Activated CD8-positive, alpha-beta T cell treated with anti-CD3 and anti-CD28 coated beads for 36 hours (primary cell): ENCODE measurements at regions of chr16 and their contacts with region 1.

Region 1: GRCh38 chr16:58515125-58515870 is at the start of gene SETD6:
- DNase-seq: peak; percentile 83
- ATAC-seq: peak; percentile 77
- H3K4me3 Mint-ChIP-seq: peak within 1 kb of the TSS; percentile 92
- H3K27ac Mint-ChIP-seq: peak within 1 kb of the TSS; percentile 90
- H3K4me1 Mint-ChIP-seq: peaks cover 36% of the 10 kb centered on the region
- H3K27me3 Mint-ChIP-seq: no peaks in the 10 kb centered on the region
- CTCF ChIP-seq: no peak
- total RNA-seq, gene SETD6: 14.8 to 15.5 TPM

Region 2: GRCh38 chr16:58409316-58409973 is 105.9 kb before region 1 on chr16:
- CTCF ChIA-PET with region 1: no interaction called
- POLR2A ChIA-PET with region 1: no interaction called
- intact Hi-C with region 1: no loop called
- DNase-seq: no peak
- ATAC-seq: no peak
- H3K4me3 Mint-ChIP-seq: no peak overlapping the region
- H3K27ac Mint-ChIP-seq: no peak overlapping the region
- H3K4me1 Mint-ChIP-seq: no peaks in the 10 kb centered on the region
- H3K27me3 Mint-ChIP-seq: no peaks in the 10 kb centered on the region
- CTCF ChIP-seq: no peak

Region 3: DNA sequence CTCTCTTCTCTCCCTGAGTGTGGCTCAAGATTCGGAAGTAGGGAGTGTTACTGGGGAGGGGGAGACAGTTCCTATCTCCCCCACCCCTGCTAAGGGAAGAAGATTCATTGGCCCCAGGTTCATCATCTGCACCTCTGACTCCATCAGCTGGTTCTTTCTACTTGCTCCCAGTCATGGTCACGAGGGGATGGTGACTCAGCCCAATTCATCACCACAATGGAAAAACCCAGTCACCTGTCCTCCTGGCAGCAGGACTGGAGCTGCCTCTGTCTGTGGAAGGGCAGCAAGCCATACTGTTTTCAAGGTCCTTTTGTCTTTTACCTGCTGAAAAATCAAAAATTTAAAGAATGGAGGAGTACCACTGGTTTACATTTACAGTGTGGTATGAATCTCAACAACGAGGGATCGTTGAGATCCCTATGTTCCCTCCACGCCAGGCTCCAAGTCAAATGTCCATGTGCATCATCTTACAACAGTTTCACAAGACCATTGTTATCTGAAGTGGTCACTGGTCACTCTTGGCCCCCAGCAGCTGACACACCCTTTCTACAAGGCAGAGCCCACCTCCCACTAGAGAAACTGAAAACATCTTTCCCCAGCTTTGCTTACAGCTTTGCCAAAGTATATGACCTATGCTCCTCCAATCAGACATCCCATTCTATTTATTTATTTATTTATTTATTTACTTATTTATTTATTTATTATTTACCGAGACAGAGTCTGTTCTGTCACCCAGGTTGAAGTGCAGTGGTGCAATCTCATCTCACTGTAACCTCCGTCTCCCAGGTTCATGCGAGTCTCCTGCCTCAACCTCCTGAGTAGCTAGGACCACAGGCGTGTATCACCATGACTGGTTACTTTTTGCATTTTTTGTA is 55.7 kb before region 1 on chr16:
- CTCF ChIA-PET with region 1: no interaction called
- POLR2A ChIA-PET with region 1: no interaction called
- intact Hi-C with region 1: no loop called
- DNase-seq: peak; percentile 87
- ATAC-seq: peak; percentile 79
- H3K4me3 Mint-ChIP-seq: no peak overlapping the region
- H3K27ac Mint-ChIP-seq: no peak overlapping the region
- H3K4me1 Mint-ChIP-seq: peaks cover 8% of the 10 kb centered on the region
- H3K27me3 Mint-ChIP-seq: peaks cover 15% of the 10 kb centered on the region
- CTCF ChIP-seq: no peak

Region 4: DNA sequence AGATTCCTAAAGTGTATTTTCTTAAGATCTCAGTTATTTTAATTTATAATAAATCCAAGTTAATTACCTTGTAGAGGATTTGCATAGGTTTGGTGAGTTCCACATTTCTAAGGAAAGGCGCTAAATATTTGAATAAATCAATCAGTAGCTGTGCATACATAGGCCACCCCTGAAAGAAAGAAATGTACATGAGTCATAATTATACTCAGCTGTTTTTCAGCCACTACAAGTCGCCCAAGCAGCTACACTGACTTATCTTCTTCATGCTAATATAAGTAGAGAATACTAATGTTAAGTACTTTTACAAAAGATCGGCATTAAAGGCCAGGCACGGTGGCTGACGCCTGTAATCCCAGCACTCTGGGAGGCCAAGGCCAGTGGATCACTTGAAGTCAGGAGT is 14.9 kb after region 1 on chr16:
- CTCF ChIA-PET with region 1: no interaction called
- POLR2A ChIA-PET with region 1: interaction called, 19 read pairs
- intact Hi-C with region 1: no loop called
- DNase-seq: no peak
- ATAC-seq: no peak
- H3K4me3 Mint-ChIP-seq: no peak overlapping the region
- H3K27ac Mint-ChIP-seq: no peak overlapping the region
- H3K4me1 Mint-ChIP-seq: no peaks in the 10 kb centered on the region
- H3K27me3 Mint-ChIP-seq: no peaks in the 10 kb centered on the region
- CTCF ChIP-seq: no peak

Region 5: GRCh38 chr16:58629572-58630104 is 114.3 kb after region 1 on chr16 and contains the start of gene CNOT1:
- CTCF ChIA-PET with region 1: interaction called, 7 read pairs
- POLR2A ChIA-PET with region 1: interaction called, 29 read pairs
- intact Hi-C with region 1: no loop called
- DNase-seq: peak; percentile 98
- ATAC-seq: peak; percentile 88
- H3K4me3 Mint-ChIP-seq: peak within 1 kb of the TSS; percentile 100
- H3K27ac Mint-ChIP-seq: peak within 1 kb of the TSS; percentile 100
- H3K4me1 Mint-ChIP-seq: peaks cover 25% of the 10 kb centered on the region
- H3K27me3 Mint-ChIP-seq: no peaks in the 10 kb centered on the region
- CTCF ChIP-seq: no peak
- total RNA-seq, gene CNOT1: 274 to 281 TPM

Region 6: DNA sequence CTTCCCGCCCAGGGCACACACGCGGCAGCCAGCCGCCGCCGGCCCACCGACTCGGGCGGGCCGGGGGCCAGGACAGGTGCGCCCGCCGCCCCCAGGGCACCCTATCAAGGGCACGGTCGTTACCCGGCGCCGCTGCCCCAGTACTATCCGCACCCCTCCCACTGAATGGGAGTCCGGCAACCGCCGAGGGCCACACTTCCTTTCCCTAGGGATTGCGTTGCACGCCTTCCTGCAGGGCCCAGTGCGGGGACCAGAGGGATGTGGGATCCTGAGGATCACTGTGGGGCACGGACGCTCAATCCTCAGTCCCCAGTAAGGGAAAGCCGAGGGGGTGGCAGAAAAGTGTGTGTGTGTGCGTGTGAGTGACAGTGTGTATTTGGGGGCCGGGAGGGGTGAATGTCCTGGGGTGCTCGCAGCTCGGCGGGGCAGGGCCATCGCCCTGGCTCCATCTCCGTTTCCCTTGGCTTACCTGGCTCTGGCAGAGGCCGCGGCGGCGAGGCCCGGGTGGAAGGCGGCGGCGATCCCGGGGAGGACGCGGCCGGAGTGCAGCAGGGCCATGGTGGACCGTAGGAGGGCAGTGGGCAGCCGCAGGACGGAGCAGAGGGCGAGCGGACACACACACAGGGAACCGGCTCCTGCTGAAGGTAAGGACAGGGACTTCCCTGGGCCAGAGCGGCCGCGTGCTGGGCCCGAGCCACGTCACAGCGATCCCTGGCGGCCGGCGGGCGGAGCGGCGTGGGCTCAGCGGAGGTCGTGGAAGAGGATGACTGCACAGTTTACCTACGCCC is 218.6 kb after region 1 on chr16 and contains the start of gene GOT2:
- CTCF ChIA-PET with region 1: no interaction called
- POLR2A ChIA-PET with region 1: interaction called, 3 read pairs
- intact Hi-C with region 1: loop called (anchors 5 kb)
- DNase-seq: peak; percentile 86
- ATAC-seq: peak; percentile 92
- H3K4me3 Mint-ChIP-seq: peak within 1 kb of the TSS; percentile 96
- H3K27ac Mint-ChIP-seq: peak within 1 kb of the TSS; percentile 97
- H3K4me1 Mint-ChIP-seq: peaks cover 39% of the 10 kb centered on the region
- H3K27me3 Mint-ChIP-seq: peaks cover under 1% of the 10 kb centered on the region
- CTCF ChIP-seq: peak; percentile 78
- total RNA-seq, gene GOT2: 159 to 166 TPM

Region 7: GRCh38 chr16:58767581-58767980 is 252.3 kb after region 1 on chr16:
- CTCF ChIA-PET with region 1: no interaction called
- POLR2A ChIA-PET with region 1: no interaction called
- intact Hi-C with region 1: loop called (anchors 10 kb)
- DNase-seq: no peak
- ATAC-seq: no peak
- H3K4me3 Mint-ChIP-seq: no peak overlapping the region
- H3K27ac Mint-ChIP-seq: no peak overlapping the region
- H3K4me1 Mint-ChIP-seq: no peaks in the 10 kb centered on the region
- H3K27me3 Mint-ChIP-seq: peaks cover 5% of the 10 kb centered on the region
- CTCF ChIP-seq: no peak